Activated T-helper 1 cell treated with anti-CD3 and anti-CD28 coated beads, Interleukin-12 subunit alpha, Interleukin-12 subunit beta, Interleukin-2, Interleukin-4 antibody, amounts not matched to agents 30 ng/mL and 10 ng/mL and 1 ng/mL, durations not matched to agents 14 hours and 24 hours and 36 hours (primary cell): ENCODE measurements at regions of chr12 and their contacts with region 1.

Region 1: GRCh38 chr12:42372154-42372791 is 46.3 kb downstream of the PPHLN1 start:
- DNase-seq: peak; percentile 12
- H3K4me3 Mint-ChIP-seq: no peak overlapping the region
- H3K27ac Mint-ChIP-seq: no peak overlapping the region
- H3K4me1 Mint-ChIP-seq: no peaks in the 10 kb centered on the region
- H3K27me3 Mint-ChIP-seq: no peaks in the 10 kb centered on the region

Region 2: GRCh38 chr12:41277116-41277945 is 1094.9 kb before region 1 on chr12:
- intact Hi-C with region 1: loop called (anchors 2 kb)
- DNase-seq: no peak
- H3K4me3 Mint-ChIP-seq: no peak overlapping the region
- H3K27ac Mint-ChIP-seq: no peak overlapping the region
- H3K4me1 Mint-ChIP-seq: no peaks in the 10 kb centered on the region
- H3K27me3 Mint-ChIP-seq: no peaks in the 10 kb centered on the region

Region 3: DNA sequence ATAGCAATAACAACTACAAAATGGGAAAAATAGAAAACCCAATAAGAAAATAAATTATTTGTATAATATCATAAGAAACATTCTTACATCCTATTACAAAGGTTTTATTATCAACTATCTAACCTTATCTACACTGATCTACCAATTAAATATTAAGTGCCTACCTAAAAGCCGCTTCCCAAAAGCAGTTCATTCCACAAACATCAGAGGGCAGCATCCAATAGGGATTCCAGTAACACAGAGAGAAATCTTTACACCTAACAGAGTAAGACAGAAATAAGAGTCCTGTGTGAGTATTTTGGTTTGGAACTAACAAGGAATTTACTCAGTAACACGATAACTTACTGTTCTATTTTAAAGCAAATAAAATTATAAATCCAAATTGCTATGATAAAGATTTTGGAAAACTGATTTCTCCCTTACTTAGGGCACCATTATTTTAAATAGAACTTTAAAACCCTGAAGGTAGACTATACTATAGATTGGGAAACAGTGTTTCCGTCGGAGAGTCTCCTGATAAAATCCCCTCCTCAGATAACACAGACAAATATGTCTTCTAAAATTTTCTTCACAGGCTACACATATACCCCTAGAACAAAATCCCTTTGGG is 242.6 kb before region 1 on chr12:
- intact Hi-C with region 1: loop called (anchors 1 kb)
- DNase-seq: no peak
- H3K4me3 Mint-ChIP-seq: no peak overlapping the region
- H3K27ac Mint-ChIP-seq: no peak overlapping the region
- H3K4me1 Mint-ChIP-seq: peaks cover 14% of the 10 kb centered on the region
- H3K27me3 Mint-ChIP-seq: no peaks in the 10 kb centered on the region

Region 4: GRCh38 chr12:42237052-42237852 is 135.0 kb before region 1 on chr12:
- intact Hi-C with region 1: loop called (anchors 5 kb)
- DNase-seq: peak; percentile 68
- H3K4me3 Mint-ChIP-seq: peak overlapping the region; percentile 87
- H3K27ac Mint-ChIP-seq: peak overlapping the region; percentile 83
- H3K4me1 Mint-ChIP-seq: peaks cover 46% of the 10 kb centered on the region
- H3K27me3 Mint-ChIP-seq: no peaks in the 10 kb centered on the region

Region 5: GRCh38 chr12:42299392-42300308 is 72.6 kb before region 1 on chr12:
- intact Hi-C with region 1: loop called (anchors 2 kb)
- DNase-seq: peak; percentile 31
- H3K4me3 Mint-ChIP-seq: no peak overlapping the region
- H3K27ac Mint-ChIP-seq: peak overlapping the region; percentile 54
- H3K4me1 Mint-ChIP-seq: peaks cover 13% of the 10 kb centered on the region
- H3K27me3 Mint-ChIP-seq: no peaks in the 10 kb centered on the region